ENCODE measurements at regions of chr11 and their contacts with region 1.

Region 1: GRCh38 chr11:101848262-101848661 is 66.5 kb upstream of the CEP126 start:
- DNase-seq: no peak
- H3K4me3 ChIP-seq: no peak overlapping the region
- H3K4me3 Mint-ChIP-seq: no peak overlapping the region
- H3K27ac ChIP-seq: no peak overlapping the region
- H3K27ac Mint-ChIP-seq: no peak overlapping the region
- H3K4me1 ChIP-seq: no peaks in the 10 kb centered on the region
- H3K4me1 Mint-ChIP-seq: no peaks in the 10 kb centered on the region
- H3K27me3 ChIP-seq: no peaks in the 10 kb centered on the region
- H3K27me3 Mint-ChIP-seq: peaks cover 0 to 5% of the 10 kb centered on the region in 2 donors

Region 2: GRCh38 chr11:101721270-101721669 is 127.0 kb before region 1 on chr11:
- CTCF ChIA-PET with region 1: no interaction called
- POLR2A ChIA-PET with region 1: no interaction called
- intact Hi-C with region 1: no loop called
- DNase-seq: no peak
- H3K4me3 ChIP-seq: no peak overlapping the region
- H3K4me3 Mint-ChIP-seq: no peak overlapping the region
- H3K27ac ChIP-seq: no peak overlapping the region
- H3K27ac Mint-ChIP-seq: no peak overlapping the region
- H3K4me1 ChIP-seq: no peaks in the 10 kb centered on the region
- H3K4me1 Mint-ChIP-seq: no peaks in the 10 kb centered on the region
- H3K27me3 ChIP-seq: no peaks in the 10 kb centered on the region
- H3K27me3 Mint-ChIP-seq: no peaks in the 10 kb centered on the region

Region 3: GRCh38 chr11:101860696-101861427 is 12.6 kb after region 1 on chr11:
- CTCF ChIA-PET with region 1: interaction called, 14 read pairs
- POLR2A ChIA-PET with region 1: no interaction called
- intact Hi-C with region 1: no loop called
- DNase-seq: peak in 4 of 5 donors; percentile 12 to 35 (median 25)
- H3K4me3 ChIP-seq: no peak overlapping the region
- H3K4me3 Mint-ChIP-seq: no peak overlapping the region
- H3K27ac ChIP-seq: no peak overlapping the region
- H3K27ac Mint-ChIP-seq: peak overlapping the region in 1 of 7 donors; percentile 7
- H3K4me1 ChIP-seq: no peaks in the 10 kb centered on the region
- H3K4me1 Mint-ChIP-seq: peaks cover 0 to 2% (median 0%) of the 10 kb centered on the region in 4 donors
- H3K27me3 ChIP-seq: no peaks in the 10 kb centered on the region
- H3K27me3 Mint-ChIP-seq: peaks cover 7 to 9% of the 10 kb centered on the region in 2 donors

Measured in CD4-positive, alpha-beta memory T cell (primary cell).